Activated B cell treated with CpG ODN at 0.5 μM for 24 hours (primary cell): ENCODE measurements at regions of chr1 and their contacts with region 1.

Region 1: GRCh38 chr1:12275369-12275768 is 45.5 kb downstream of the VPS13D start:
- DNase-seq: no peak
- ATAC-seq: no peak
- H3K4me3 Mint-ChIP-seq: no peak overlapping the region
- H3K27ac Mint-ChIP-seq: no peak overlapping the region
- H3K4me1 Mint-ChIP-seq: no peaks in the 10 kb centered on the region
- H3K27me3 Mint-ChIP-seq: no peaks in the 10 kb centered on the region
- CTCF ChIP-seq: no peak

Region 2: GRCh38 chr1:10996100-10996499 is 1279.3 kb before region 1 on chr1:
- CTCF ChIA-PET with region 1: no interaction called
- POLR2A ChIA-PET with region 1: no interaction called
- intact Hi-C with region 1: no loop called
- DNase-seq: no peak
- ATAC-seq: no peak
- H3K4me3 Mint-ChIP-seq: no peak overlapping the region
- H3K27ac Mint-ChIP-seq: no peak overlapping the region
- H3K4me1 Mint-ChIP-seq: peaks cover 2% of the 10 kb centered on the region
- H3K27me3 Mint-ChIP-seq: no peaks in the 10 kb centered on the region
- CTCF ChIP-seq: no peak

Region 3: DNA sequence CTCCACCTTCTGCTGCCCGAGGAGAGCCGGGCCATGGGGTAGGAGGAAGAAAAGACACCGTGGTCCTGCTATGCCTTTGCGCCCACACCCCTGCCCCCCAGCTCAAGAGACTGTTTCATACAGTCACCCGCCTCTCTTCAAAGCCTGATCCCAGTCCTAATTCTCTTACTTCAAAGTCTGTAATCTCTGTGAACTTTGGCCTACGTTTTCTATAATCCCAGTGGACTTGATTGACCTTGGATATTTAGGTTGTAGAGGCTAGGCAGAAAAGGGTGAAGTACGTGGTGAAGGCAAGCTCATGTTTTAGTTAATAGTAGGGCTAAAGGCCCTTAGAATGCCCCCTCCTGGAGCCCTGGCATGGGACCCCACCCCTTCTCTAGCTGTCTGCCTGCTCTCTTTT is 17.1 kb before region 1 on chr1:
- CTCF ChIA-PET with region 1: interaction called, 10 read pairs
- POLR2A ChIA-PET with region 1: no interaction called
- intact Hi-C with region 1: no loop called
- DNase-seq: no peak
- ATAC-seq: no peak
- H3K4me3 Mint-ChIP-seq: no peak overlapping the region
- H3K27ac Mint-ChIP-seq: no peak overlapping the region
- H3K4me1 Mint-ChIP-seq: no peaks in the 10 kb centered on the region
- H3K27me3 Mint-ChIP-seq: no peaks in the 10 kb centered on the region
- CTCF ChIP-seq: no peak